Heart left ventricle (tissue), 16 donors: ENCODE measurements at regions of chr13 and their contacts with region 1.

Region 1: GRCh38 chr13:32315238-32316027 is at the starts of genes BRCA2 and ZAR1L:
- DNase-seq: peak; percentile 90 to 94 (median 91)
- ATAC-seq: peak; percentile 92 to 98 (median 98)
- H3K4me3 ChIP-seq: peak within 1 kb of the TSS; percentile 43 to 91 (median 79)
- H3K27ac ChIP-seq: peak within 1 kb of the TSS; percentile 74 to 99 (median 92)
- H3K4me1 ChIP-seq: peaks cover 0 to 29% (median 5%) of the 10 kb centered on the region in 12 donors
- H3K27me3 ChIP-seq: no peaks in the 10 kb centered on the region
- CTCF ChIP-seq: peak in 3 of 12 donors; percentile 13 to 18 (median 14)
- POLR2A ChIP-seq: peak in 1 of 2 donors; percentile 77
- total RNA-seq, gene BRCA2: 0.13 to 5.2 (median 0.42) TPM
- total RNA-seq, gene ZAR1L: not detected

Region 2: DNA sequence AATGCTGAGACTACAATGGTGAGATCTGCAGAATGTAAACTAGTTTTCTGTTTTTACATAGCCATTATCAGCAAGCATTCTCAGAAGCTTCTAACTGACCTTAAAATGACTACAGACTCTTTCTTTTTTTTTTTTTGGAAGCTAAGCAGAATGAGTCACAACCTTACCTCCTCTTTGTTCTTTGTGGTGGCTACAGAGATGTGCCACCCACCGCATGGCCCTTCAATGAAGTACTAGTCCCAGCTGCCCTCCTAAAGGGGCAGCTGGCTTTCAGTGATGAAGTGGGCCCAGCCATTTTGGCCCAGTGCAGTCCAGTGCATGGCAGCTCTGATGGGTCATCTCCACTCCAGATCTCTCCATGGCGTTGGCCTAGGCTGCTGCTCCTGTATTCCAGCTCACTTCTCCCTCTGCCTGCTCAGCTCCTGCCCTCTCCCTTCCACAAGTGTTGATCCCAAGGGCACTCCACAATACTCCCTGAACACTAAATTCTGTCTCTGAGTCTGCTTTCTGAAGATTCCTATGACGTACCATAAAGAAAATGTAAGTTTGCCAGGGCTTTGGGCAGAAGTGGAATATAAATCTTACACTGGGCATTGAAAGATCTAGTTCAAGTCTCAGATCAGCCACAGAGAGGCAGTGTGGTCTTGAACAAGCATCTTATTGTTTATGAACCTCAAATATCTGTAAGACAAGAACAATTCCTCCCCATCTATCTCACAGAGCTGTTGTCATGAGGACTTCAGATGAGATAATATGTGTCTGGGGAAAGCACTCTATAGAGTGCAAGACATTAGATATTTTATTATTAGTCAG is 490.5 kb before region 1 on chr13:
- intact Hi-C with region 1: loop called in 5 of 10 experiments (anchors 2 to 10 kb)
- DNase-seq: no peak
- ATAC-seq: peak; percentile 39 to 81 (median 74)
- H3K4me3 ChIP-seq: no peak overlapping the region
- H3K27ac ChIP-seq: no peak overlapping the region
- H3K4me1 ChIP-seq: peaks cover 0 to 6% (median 0%) of the 10 kb centered on the region in 12 donors
- H3K27me3 ChIP-seq: no peaks in the 10 kb centered on the region
- CTCF ChIP-seq: peak; percentile 10 to 64 (median 46)
- POLR2A ChIP-seq: no peak

Region 3: GRCh38 chr13:32246468-32246867 is 69.0 kb before region 1 on chr13:
- intact Hi-C with region 1: loop called in 9 of 10 experiments (anchors 1 to 5 kb)
- DNase-seq: peak in 4 of 5 donors; percentile 53 to 73 (median 58)
- ATAC-seq: peak; percentile 51 to 93 (median 90)
- H3K4me3 ChIP-seq: peak overlapping the region in 1 of 12 donors; percentile 16
- H3K27ac ChIP-seq: peak overlapping the region in 6 of 12 donors; percentile 6 to 43 (median 36)
- H3K4me1 ChIP-seq: peaks cover 0 to 20% (median 13%) of the 10 kb centered on the region in 12 donors
- H3K27me3 ChIP-seq: no peaks in the 10 kb centered on the region
- CTCF ChIP-seq: peak; percentile 65 to 82 (median 72)
- POLR2A ChIP-seq: no peak

Region 4: GRCh38 chr13:32267836-32268439 is 47.5 kb before region 1 on chr13:
- intact Hi-C with region 1: no loop called
- DNase-seq: no peak
- ATAC-seq: no peak
- H3K4me3 ChIP-seq: no peak overlapping the region
- H3K27ac ChIP-seq: no peak overlapping the region
- H3K4me1 ChIP-seq: peaks cover 4 to 46% (median 26%) of the 10 kb centered on the region in 12 donors
- H3K27me3 ChIP-seq: no peaks in the 10 kb centered on the region
- CTCF ChIP-seq: peak; percentile 11 to 64 (median 44)
- POLR2A ChIP-seq: no peak

Region 5: DNA sequence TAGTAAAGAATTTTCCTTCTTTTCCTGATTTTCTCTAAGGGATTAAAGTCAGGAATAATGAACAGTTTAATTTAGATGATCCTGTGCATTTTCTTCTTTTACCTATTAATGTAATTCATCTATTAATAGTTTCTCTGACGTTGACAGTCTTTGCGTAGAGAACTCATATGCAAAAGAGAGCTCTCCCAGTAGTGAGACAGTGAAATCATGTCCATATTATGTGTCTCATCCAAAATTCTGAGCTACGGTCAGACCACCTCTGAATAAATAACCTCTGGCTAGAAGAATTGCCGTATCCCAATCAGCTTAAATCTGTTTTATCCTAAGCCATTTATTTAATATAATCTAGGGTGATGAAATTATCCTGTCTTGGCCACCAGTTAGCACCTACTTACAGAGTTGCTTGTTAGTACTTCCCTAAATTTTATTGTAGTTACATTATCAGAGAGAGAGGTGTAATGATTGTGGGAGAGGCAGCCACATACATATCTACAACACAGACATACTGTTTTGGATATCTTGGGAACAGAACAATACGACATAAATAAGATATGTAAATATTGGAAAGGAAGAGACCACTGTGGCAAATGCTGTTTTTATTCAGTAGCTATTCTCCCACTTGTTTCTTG is 301.6 kb after region 1 on chr13:
- intact Hi-C with region 1: no loop called
- DNase-seq: no peak
- ATAC-seq: no peak
- H3K4me3 ChIP-seq: no peak overlapping the region
- H3K27ac ChIP-seq: no peak overlapping the region
- H3K4me1 ChIP-seq: peaks cover 0 to 8% (median 0%) of the 10 kb centered on the region in 12 donors
- H3K27me3 ChIP-seq: no peaks in the 10 kb centered on the region
- CTCF ChIP-seq: no peak
- POLR2A ChIP-seq: no peak

Region 6: DNA sequence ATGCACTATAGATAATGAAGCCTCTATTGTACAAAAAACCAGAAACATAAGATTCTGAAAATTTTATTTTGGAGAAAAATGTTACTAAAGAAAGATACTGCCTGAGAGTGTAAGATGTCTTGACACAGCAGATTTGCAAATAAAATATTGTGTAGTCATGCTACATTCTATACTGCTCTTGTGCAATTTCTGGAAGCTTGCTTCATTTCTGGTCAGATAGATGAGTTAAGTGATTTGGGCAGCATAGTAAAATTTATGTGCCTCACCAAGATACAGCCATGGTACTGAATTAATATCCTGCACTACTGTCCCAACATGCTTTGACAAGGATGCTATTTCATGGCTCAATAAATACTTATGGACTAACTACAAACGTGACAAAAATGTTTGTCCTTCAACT is 1025.2 kb after region 1 on chr13:
- intact Hi-C with region 1: no loop called
- DNase-seq: no peak
- ATAC-seq: no peak
- H3K4me3 ChIP-seq: no peak overlapping the region
- H3K27ac ChIP-seq: no peak overlapping the region
- H3K4me1 ChIP-seq: peaks cover 0 to 27% (median 4%) of the 10 kb centered on the region in 12 donors
- H3K27me3 ChIP-seq: no peaks in the 10 kb centered on the region
- CTCF ChIP-seq: no peak
- POLR2A ChIP-seq: no peak